Prostate gland (tissue), 2 donors: ENCODE measurements at regions of chr18 and their contacts with region 1.

Region 1: GRCh38 chr18:7369006-7369405 is 138.1 kb downstream of the LRRC30 start:
- DNase-seq: no peak
- H3K4me3 ChIP-seq: no peak overlapping the region
- H3K27ac ChIP-seq: no peak overlapping the region
- H3K4me1 ChIP-seq: peaks cover 5% of the 10 kb centered on the region
- H3K27me3 ChIP-seq: no peaks in the 10 kb centered on the region
- CTCF ChIP-seq: no peak
- POLR2A ChIP-seq: no peak

Region 2: GRCh38 chr18:7281579-7281978 is 87.4 kb before region 1 on chr18:
- intact Hi-C with region 1: loop called (anchors 10 kb)
- DNase-seq: no peak
- H3K4me3 ChIP-seq: no peak overlapping the region
- H3K27ac ChIP-seq: no peak overlapping the region
- H3K4me1 ChIP-seq: no peaks in the 10 kb centered on the region
- H3K27me3 ChIP-seq: no peaks in the 10 kb centered on the region
- CTCF ChIP-seq: no peak
- POLR2A ChIP-seq: no peak